Activated CD8-positive, alpha-beta T cell treated with anti-CD3 and anti-CD28 coated beads, Interleukin-2, amount 10 ng/mL, durations not matched to agents 7 days and 5 days (primary cell): ENCODE measurements at regions of chr12 and their contacts with region 1.

Region 1: GRCh38 chr12:53352331-53353256 is 16.4 kb upstream of the SP7 start:
- DNase-seq: peak; percentile 92
- ATAC-seq: peak; percentile 99
- H3K4me3 Mint-ChIP-seq: no peak overlapping the region
- H3K27ac Mint-ChIP-seq: peak overlapping the region; percentile 23
- H3K4me1 Mint-ChIP-seq: peaks cover 9% of the 10 kb centered on the region
- H3K27me3 Mint-ChIP-seq: no peaks in the 10 kb centered on the region

Region 2: GRCh38 chr12:53365245-53365904 is 12.8 kb after region 1 on chr12:
- CTCF ChIA-PET with region 1: interaction called, 20 read pairs
- POLR2A ChIA-PET with region 1: no interaction called
- DNase-seq: no peak
- ATAC-seq: no peak
- H3K4me3 Mint-ChIP-seq: no peak overlapping the region
- H3K27ac Mint-ChIP-seq: peak overlapping the region; percentile 4
- H3K4me1 Mint-ChIP-seq: peaks cover 11% of the 10 kb centered on the region
- H3K27me3 Mint-ChIP-seq: no peaks in the 10 kb centered on the region

Region 3: GRCh38 chr12:53391729-53392128 is 39.1 kb after region 1 on chr12:
- CTCF ChIA-PET with region 1: interaction called, 27 read pairs
- POLR2A ChIA-PET with region 1: no interaction called
- DNase-seq: no peak
- ATAC-seq: no peak
- H3K4me3 Mint-ChIP-seq: no peak overlapping the region
- H3K27ac Mint-ChIP-seq: no peak overlapping the region
- H3K4me1 Mint-ChIP-seq: peaks cover 36% of the 10 kb centered on the region
- H3K27me3 Mint-ChIP-seq: no peaks in the 10 kb centered on the region

Region 4: DNA sequence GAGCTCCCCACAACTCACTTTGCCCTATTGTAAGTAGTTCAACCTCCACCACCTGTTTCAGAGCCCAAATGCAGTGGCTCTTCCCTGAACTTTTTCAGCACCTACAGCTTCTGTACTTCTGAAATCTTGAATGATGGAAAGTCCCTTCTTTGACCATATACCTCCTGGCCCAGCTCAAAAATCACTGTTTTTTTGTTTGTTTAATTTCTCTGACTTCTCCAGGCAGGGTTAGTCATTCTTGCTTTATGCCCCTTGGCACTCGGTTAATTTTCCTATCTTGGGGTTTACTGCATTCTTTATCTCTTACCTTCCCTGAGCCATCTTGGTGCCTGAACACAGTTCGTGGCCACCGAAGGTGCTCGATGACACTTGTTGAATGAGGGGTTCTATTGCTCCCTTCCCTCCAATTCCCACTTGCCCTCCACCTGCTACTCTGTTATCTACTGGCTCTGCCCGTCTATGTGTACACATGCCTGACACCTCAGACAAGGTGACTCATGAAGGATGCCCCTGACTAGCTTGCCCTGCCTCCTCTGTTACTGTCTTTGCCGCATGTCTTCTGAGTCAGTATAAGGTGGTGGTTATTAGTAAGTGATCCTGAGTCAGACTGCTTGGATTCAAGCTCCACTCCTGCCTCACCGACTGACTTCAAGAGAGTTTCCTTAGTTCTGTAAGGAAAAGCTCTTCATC is 75.5 kb after region 1 on chr12:
- CTCF ChIA-PET with region 1: interaction called, 171 read pairs
- POLR2A ChIA-PET with region 1: no interaction called
- DNase-seq: no peak
- ATAC-seq: no peak
- H3K4me3 Mint-ChIP-seq: no peak overlapping the region
- H3K27ac Mint-ChIP-seq: no peak overlapping the region
- H3K4me1 Mint-ChIP-seq: no peaks in the 10 kb centered on the region
- H3K27me3 Mint-ChIP-seq: no peaks in the 10 kb centered on the region

Region 5: GRCh38 chr12:53500776-53501614 is 148.4 kb after region 1 on chr12 and contains the start of gene TARBP2:
- CTCF ChIA-PET with region 1: interaction called, 15 read pairs
- POLR2A ChIA-PET with region 1: no interaction called
- DNase-seq: peak; percentile 97
- ATAC-seq: peak; percentile 84
- H3K4me3 Mint-ChIP-seq: peak within 1 kb of the TSS; percentile 81
- H3K27ac Mint-ChIP-seq: peak within 1 kb of the TSS; percentile 94
- H3K4me1 Mint-ChIP-seq: peaks cover 43% of the 10 kb centered on the region
- H3K27me3 Mint-ChIP-seq: no peaks in the 10 kb centered on the region
- total RNA-seq, gene TARBP2: 30.3 to 36.9 TPM

Region 6: GRCh38 chr12:53518381-53518780 is 165.8 kb after region 1 on chr12:
- CTCF ChIA-PET with region 1: interaction called, 10 read pairs
- POLR2A ChIA-PET with region 1: no interaction called
- DNase-seq: no peak
- ATAC-seq: no peak
- H3K4me3 Mint-ChIP-seq: no peak overlapping the region
- H3K27ac Mint-ChIP-seq: no peak overlapping the region
- H3K4me1 Mint-ChIP-seq: peaks cover 16% of the 10 kb centered on the region
- H3K27me3 Mint-ChIP-seq: no peaks in the 10 kb centered on the region